ENCODE measurements at regions of chr6 and their contacts with region 1.

Region 1: GRCh38 chr6:131909408-131910218 is 41.6 kb downstream of the CCN2 start:
- DNase-seq: peak in 1 of 2 donors; percentile 79
- ATAC-seq: peak in 6 of 8 donors; percentile 52 to 81 (median 71)
- H3K4me3 ChIP-seq: no peak overlapping the region
- H3K27ac ChIP-seq: no peak overlapping the region
- H3K4me1 ChIP-seq: no peaks in the 10 kb centered on the region
- H3K27me3 ChIP-seq: peaks cover 0 to 33% (median 14%) of the 10 kb centered on the region in 7 donors
- CTCF ChIP-seq: peak; percentile 69 to 95 (median 87)

Region 2: DNA sequence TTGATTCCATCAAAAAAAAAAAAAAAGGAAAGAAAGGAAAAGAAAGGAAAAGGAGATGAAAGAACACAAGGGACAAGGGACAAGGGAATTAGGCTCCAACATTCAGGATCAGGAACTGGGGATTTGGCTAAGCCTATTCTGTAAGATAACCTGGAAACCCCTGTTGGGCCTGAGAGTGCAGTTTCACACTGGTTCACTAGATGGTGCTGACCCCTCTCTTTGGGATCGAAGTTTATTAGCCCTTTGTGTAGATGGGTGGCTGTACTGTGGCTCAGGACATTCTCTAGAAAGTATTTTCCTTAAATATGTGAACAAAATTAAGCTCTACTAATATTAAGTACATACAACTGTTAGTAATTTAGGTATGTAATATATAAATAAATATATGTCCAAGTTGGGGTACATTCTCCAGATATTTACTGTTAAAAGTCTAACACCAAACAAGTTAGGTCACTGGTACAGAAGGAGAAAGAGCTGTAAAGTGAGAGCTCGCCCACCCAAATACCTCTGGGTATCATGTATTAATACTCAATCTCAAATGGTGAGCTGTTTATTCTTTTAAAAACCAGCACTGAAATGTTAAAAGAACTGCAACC is 214.7 kb before region 1 on chr6:
- intact Hi-C with region 1: loop called in 8 of 10 experiments (anchors 2 to 10 kb)
- DNase-seq: peak in 1 of 2 donors; percentile 54
- ATAC-seq: peak in 7 of 8 donors; percentile 75 to 89 (median 80)
- H3K4me3 ChIP-seq: no peak overlapping the region
- H3K27ac ChIP-seq: no peak overlapping the region
- H3K4me1 ChIP-seq: no peaks in the 10 kb centered on the region
- H3K27me3 ChIP-seq: no peaks in the 10 kb centered on the region
- CTCF ChIP-seq: peak; percentile 53 to 85 (median 79)

Region 3: DNA sequence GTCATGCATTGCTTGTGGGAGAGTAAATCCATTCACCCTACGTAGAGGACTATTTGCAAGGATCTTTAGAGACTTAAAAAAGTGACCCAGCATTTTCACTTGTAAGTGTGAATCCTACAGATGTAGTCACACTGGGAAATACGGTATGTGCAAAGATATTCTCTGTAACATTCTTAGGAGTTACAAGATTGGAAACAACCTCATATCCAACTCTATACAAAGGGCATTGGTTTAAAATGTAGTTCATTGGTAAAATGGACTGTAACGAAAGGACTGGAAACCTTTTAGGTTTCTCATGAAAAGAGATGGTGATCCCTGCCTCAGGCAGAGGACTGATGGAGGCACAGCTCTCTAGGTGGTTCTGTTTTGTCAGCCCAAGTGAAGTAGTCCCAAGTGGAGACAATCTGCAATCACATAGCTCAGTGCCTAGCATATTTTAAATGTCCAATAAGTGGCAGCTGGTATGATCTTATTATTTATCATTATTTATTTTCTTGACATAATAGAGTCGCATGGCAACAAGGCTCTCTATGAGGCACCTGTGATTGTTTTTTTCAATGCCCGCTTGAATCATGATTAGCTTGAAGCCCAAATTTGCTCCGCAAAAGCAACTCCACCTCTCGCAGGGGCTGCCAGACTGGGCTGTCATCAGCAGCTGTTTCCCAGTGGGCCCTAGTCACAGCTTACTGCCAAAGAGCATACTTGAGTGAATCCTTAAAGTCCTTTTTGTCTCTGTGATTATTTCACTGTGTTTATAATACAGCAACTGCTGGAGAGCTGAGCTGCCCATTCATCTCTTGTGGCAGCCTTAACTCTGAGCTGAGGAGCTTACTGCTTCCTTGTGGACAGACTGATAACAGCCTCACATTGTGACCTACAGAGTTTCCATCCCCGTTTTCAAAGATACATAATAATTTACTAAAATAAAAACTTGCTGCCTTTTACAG is 121.6 kb before region 1 on chr6:
- intact Hi-C with region 1: loop called in 2 of 10 experiments (anchors 10 kb)
- DNase-seq: peak in 1 of 2 donors; percentile 27
- ATAC-seq: peak in 5 of 8 donors; percentile 33 to 73 (median 57)
- H3K4me3 ChIP-seq: no peak overlapping the region
- H3K27ac ChIP-seq: no peak overlapping the region
- H3K4me1 ChIP-seq: no peaks in the 10 kb centered on the region
- H3K27me3 ChIP-seq: no peaks in the 10 kb centered on the region
- CTCF ChIP-seq: peak in 3 of 9 donors; percentile 25 to 50 (median 36)

Region 4: GRCh38 chr6:131890091-131890490 is 19.5 kb before region 1 on chr6:
- intact Hi-C with region 1: loop called in 1 of 10 experiments (anchors 2 kb)
- DNase-seq: no peak
- ATAC-seq: no peak
- H3K4me3 ChIP-seq: no peak overlapping the region
- H3K27ac ChIP-seq: no peak overlapping the region
- H3K4me1 ChIP-seq: no peaks in the 10 kb centered on the region
- H3K27me3 ChIP-seq: no peaks in the 10 kb centered on the region
- CTCF ChIP-seq: no peak

Measured in heart right ventricle (tissue), 16 donors.